ENCODE measurements at regions of chr18 and their contacts with region 1.

Region 1: DNA sequence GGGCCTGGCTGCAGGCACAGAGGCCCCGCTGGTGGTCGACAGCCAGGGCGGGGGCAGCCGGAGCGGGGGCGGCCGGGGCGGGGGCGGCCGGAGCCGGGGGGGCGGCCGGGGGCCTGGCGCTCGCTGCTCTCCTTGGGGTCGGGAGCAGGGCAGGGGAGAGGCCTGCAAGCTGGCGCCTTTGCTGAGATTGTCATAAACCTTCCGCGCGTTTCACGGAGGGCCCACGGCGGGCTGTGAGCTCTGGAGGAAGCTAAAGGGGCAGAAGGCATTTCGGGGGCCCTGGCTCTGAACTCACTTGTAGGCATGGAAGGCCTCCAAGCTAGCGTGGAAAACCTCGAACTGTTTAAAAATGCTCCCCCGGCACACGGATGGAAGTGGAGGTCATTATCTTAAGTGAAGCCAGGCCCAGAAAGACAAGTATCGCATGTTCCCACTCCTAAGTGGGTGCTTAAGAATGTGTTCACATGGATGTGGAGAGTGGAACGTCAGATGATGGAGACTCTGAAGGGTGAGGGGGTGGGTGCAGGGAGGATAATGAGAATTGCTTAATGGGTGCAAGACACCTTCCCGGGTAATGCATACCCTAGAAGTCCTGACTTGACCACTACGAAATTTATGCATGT is 629 bp downstream of the PRELID3A start:
- DNase-seq: peak in 3 of 10 donors; percentile 21 to 87 (median 85)

Region 2: DNA sequence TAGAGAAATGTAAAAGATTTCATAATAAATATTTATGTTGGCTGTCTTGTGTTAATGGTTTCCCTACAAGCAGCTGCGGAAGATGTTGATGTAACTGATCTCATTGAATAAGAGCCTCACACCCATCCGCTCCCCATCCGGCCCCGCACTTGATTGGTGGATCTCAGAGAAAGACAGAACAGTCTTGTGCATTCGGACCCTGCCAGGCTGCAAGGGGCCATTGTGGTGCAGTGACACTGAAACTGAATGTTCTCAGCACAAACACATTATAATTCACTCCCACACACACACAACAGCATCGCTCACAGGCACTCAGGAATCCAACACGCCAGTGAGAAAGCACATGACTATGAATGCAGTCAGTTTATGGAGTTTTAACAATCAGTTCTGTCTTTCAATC is 47.1 kb after region 1 on chr18:
- intact Hi-C with region 1: loop called (anchors 5 kb)
- DNase-seq: peak; percentile 81 to 98 (median 91)

Region 3: DNA sequence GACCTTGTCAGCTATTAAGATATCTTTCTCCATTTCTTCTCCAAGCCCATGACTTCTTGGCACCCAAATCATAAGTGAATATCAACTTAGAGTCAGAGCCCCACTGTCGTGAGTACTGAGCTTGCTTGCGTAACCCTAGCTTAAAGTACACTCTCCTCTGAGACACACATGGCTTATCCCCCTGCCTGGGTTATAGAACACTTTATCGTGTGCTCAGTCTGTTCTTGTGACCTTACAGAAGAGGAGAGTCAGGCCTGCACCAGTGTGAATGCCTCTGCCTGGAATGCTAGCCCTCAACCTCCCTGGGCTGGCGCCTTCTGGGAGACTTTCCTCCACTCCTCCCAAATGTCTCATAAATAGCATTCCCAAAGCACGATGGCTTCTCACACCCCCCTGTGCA is 662.1 kb after region 1 on chr18:
- intact Hi-C with region 1: no loop called
- DNase-seq: no peak

Measured in posterior cingulate gyrus (tissue), 11 donors.